ENCODE measurements at regions of chr17 and their contacts with region 1.

Region 1: GRCh38 chr17:60473788-60474187 is 51.5 kb downstream of the CHCT1 start:
- DNase-seq: no peak
- ATAC-seq: no peak
- H3K4me3 ChIP-seq: no peak overlapping the region
- H3K27ac ChIP-seq: no peak overlapping the region
- H3K4me1 ChIP-seq: peaks cover 10% of the 10 kb centered on the region
- H3K27me3 ChIP-seq: no peaks in the 10 kb centered on the region
- CTCF ChIP-seq: no peak

Region 2: DNA sequence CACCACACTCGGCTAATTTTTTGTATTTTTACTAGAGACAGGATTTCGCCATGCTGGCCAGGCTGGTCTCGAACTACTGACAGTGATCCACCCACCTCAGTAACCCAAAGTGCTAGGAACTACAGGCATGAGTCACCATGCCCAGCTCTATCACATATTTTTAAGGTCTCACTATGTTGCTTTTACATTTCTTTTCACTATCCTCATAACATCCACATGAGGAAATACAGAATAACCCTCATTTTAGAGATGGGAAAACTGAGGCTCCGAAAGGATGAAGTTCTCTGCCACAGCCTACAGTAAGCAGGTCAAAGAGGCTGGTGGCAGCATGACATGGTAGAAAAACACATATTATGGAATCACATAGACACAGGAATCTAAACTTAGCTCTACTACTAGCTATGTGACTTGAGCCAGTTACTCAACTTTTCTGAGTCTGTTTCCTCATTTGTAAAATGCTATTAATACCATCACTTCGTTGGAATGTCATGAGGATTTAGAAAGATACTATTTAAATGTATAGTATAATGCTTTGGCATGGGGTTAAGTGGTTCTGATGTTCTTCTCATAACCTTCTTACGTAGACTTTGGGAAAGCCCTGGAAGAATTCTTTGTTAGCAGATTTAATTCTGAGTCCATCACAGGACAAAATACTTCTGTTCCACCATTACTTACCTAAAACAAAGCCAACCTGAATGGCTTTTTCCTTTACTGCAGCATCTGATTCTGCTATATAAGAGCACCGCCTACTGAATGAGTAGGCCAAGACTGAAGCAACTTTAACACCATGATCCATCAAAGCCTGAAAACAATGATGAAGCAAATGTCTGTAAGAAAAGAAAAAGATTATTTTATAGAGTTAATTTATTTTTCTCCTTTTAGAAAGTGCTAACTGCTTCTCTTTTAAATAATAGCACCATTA is 20.3 kb after region 1 on chr17:
- CTCF ChIA-PET with region 1: no interaction called
- POLR2A ChIA-PET with region 1: no interaction called
- intact Hi-C with region 1: no loop called
- DNase-seq: no peak
- ATAC-seq: no peak
- H3K4me3 ChIP-seq: no peak overlapping the region
- H3K27ac ChIP-seq: no peak overlapping the region
- H3K4me1 ChIP-seq: no peaks in the 10 kb centered on the region
- H3K27me3 ChIP-seq: no peaks in the 10 kb centered on the region
- CTCF ChIP-seq: no peak

Region 3: GRCh38 chr17:60630352-60630751 is 156.6 kb after region 1 on chr17:
- CTCF ChIA-PET with region 1: no interaction called
- POLR2A ChIA-PET with region 1: no interaction called
- intact Hi-C with region 1: loop called (anchors 10 kb)
- DNase-seq: no peak
- ATAC-seq: peak; percentile 51; the same call in 1 of the 2 replicates
- H3K4me3 ChIP-seq: no peak overlapping the region
- H3K27ac ChIP-seq: no peak overlapping the region
- H3K4me1 ChIP-seq: no peaks in the 10 kb centered on the region
- H3K27me3 ChIP-seq: no peaks in the 10 kb centered on the region
- CTCF ChIP-seq: no peak